Ovary (tissue), 10 donors: ENCODE measurements at regions of chr20 and their contacts with region 1.

Region 1: DNA sequence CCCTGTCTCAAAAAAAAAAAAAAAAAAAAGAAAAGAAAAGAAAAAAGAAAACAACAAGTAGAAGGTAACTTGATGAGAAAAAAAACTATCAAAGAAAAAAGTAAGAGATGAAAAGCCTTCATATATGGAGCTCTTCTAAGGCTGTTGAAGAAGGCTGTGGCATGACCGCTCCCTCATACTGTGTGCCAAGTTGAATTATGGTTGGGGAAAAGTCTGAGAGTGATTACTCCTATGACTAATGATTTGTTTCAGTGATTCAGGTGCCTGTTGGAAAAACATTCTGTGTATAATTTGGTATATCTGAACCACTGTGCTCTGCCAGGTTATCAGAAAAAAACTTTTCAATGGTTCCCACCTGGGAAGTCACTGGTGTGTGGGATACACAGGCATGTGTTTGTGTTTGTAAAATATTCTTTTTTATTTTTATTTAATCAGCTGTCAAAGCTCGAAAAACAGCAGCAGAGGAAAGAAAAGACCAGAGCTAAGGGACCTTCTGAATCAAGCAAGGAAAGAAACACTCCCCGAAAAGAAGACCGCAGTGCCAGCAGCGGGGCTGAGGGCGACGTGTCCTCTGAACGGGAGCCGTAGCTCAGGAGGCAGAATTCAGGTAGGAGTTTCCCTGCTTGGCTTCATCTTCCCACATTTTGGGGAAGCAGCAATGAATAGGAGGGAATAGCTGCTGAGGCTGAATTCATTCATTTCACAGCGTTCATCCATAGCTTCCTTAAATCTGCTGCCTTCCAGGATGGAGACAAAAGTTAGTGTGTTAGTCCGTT is 69.7 kb upstream of the SCP2D1 start:
- DNase-seq: no peak
- H3K4me3 ChIP-seq: no peak overlapping the region
- H3K27ac ChIP-seq: no peak overlapping the region
- H3K4me1 ChIP-seq: peaks cover 4% of the 10 kb centered on the region
- H3K27me3 ChIP-seq: no peaks in the 10 kb centered on the region
- CTCF ChIP-seq: no peak
- EP300 ChIP-seq: no peak
- POLR2A ChIP-seq: no peak

Region 2: GRCh38 chr20:18103497-18103896 is 640.4 kb before region 1 on chr20:
- intact Hi-C with region 1: no loop called
- DNase-seq: no peak
- H3K4me3 ChIP-seq: no peak overlapping the region
- H3K27ac ChIP-seq: no peak overlapping the region
- H3K4me1 ChIP-seq: no peaks in the 10 kb centered on the region
- H3K27me3 ChIP-seq: no peaks in the 10 kb centered on the region
- CTCF ChIP-seq: no peak
- EP300 ChIP-seq: no peak
- POLR2A ChIP-seq: no peak

Region 3: DNA sequence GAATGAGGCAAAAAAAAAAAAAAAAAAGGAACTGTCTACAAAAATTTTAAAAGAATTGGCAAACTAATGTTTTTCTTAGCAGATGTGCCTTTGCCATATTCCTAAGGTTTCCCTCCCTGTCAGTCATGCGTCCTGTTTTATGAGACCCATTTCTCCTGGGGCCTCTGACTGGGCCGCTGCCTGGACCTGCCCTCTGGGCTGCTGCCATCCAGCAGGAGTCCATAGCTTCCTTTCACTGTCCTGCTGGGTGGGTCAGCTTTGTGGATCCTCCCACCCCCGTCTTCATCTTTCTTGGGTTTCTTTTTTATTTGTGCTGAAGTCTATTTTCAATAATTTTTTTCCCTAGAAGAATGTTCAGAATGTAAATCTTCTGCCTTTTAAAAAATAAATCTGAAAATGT is 41.1 kb before region 1 on chr20:
- intact Hi-C with region 1: loop called in 1 of 4 experiments (anchors 1 kb)
- DNase-seq: peak in 1 of 5 donors; percentile 55
- H3K4me3 ChIP-seq: no peak overlapping the region
- H3K27ac ChIP-seq: no peak overlapping the region
- H3K4me1 ChIP-seq: no peaks in the 10 kb centered on the region
- H3K27me3 ChIP-seq: no peaks in the 10 kb centered on the region
- CTCF ChIP-seq: no peak
- EP300 ChIP-seq: no peak
- POLR2A ChIP-seq: no peak